ENCODE measurements at regions of chr9 and their contacts with region 1.

Region 1: GRCh38 chr9:77712533-77713130 is 64.5 kb upstream of the GNA14 start:
- DNase-seq: no peak
- ATAC-seq: no peak

Region 2: GRCh38 chr9:77251050-77251449 is 461.6 kb before region 1 on chr9:
- intact Hi-C with region 1: no loop called
- DNase-seq: no peak
- ATAC-seq: no peak

Region 3: GRCh38 chr9:77639396-77639795 is 73.2 kb before region 1 on chr9:
- intact Hi-C with region 1: no loop called
- DNase-seq: no peak
- ATAC-seq: no peak

Region 4: GRCh38 chr9:77680581-77680980 is 32.1 kb before region 1 on chr9:
- intact Hi-C with region 1: no loop called
- DNase-seq: no peak
- ATAC-seq: no peak

Region 5: DNA sequence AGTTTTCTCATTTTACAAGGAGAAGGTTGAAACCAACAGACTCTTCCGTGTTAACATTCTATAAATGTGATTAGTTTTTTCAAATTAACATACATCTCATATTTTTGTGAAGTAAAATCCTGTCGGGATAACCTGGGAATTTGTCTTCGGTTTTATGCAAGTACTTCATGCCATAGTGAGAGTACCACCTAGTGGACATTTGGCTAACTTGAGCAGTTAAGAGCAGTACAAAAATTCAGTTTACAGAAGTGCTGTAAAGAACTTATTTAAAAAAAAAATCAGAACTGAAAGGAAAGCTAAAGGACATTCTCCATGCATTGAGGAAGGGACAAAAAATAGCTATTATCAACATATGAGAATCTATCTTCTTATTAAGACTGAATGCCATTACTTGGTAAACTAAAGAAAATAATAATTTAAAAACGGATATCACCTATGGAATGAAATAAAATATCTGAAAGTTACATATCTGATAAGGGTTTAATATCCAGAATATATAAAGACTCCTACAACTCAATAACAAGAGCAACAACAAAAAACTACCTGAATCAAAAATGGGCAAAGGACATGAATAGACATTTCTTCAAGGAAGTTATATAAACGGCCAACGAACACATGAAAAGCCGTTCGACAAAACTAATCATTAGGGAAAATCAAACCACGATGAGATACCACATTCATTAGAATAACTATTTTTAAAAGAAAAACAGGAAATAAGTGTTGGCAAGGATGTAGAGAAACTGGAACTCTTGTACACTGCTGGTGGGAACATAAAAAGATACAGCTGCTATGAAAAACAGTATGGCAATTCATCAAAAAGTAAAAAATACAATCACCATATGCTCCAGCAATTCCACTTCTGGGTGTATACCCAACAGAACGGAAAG is 52.5 kb after region 1 on chr9:
- intact Hi-C with region 1: loop called (anchors 5 kb)
- DNase-seq: no peak
- ATAC-seq: no peak